Ascending aorta (tissue), 2 donors: ENCODE measurements at regions of chr12 and their contacts with region 1.

Region 1: GRCh38 chr12:7970475-7971252 is 34.7 kb upstream of the SLC2A3 start:
- DNase-seq: peak; percentile 52 to 94
- H3K4me3 ChIP-seq: peak overlapping the region; percentile 56 to 72
- H3K27ac ChIP-seq: peak overlapping the region; percentile 64 to 82
- H3K4me1 ChIP-seq: peaks cover 0 to 7% of the 10 kb centered on the region in 2 donors
- H3K27me3 ChIP-seq: no peaks in the 10 kb centered on the region
- CTCF ChIP-seq: no peak

Region 2: DNA sequence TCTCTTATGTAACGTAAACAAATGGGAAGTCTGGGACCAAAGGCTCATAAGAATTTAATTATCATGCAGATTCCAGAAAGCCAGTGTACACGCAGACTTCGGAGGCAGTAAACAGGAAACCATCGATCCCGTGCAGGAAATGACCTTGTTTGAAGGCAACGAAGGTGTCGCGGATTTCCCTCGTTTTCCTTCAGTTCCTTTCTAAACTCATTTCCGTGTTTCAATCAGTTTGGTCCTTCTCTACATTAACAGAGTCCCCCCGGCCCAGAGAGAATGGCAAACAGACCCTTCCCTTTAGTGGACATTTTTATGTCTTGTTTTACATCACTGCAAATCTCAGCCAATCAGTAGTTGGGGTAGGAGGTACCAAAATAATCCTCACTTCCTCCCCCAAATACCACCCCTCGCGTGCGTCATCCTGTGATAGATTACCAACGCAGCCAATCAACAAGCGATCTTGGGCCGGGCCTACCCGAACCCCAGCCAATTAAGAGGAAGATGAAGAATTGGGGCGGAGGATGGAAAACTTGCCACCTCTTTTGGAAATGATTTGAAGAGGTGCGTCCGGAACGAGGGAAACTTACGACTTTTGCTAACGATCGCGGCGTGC is 55.7 kb after region 1 on chr12:
- intact Hi-C with region 1: loop called (anchors 2 kb)
- DNase-seq: peak; percentile 96 to 99
- H3K4me3 ChIP-seq: peak overlapping the region; percentile 76 to 92
- H3K27ac ChIP-seq: peak overlapping the region; percentile 100
- H3K4me1 ChIP-seq: peaks cover 0 to 4% of the 10 kb centered on the region in 2 donors
- H3K27me3 ChIP-seq: no peaks in the 10 kb centered on the region
- CTCF ChIP-seq: no peak